CD4-positive, alpha-beta memory T cell (primary cell): ENCODE measurements at regions of chrX and their contacts with region 1.

Region 1: GRCh38 chrX:71111141-71111843 is at the start of gene IL2RG:
- DNase-seq: peak; percentile 89 to 95 (median 93)
- H3K4me3 ChIP-seq: peak within 1 kb of the TSS; percentile 81 to 93
- H3K4me3 Mint-ChIP-seq: peak within 1 kb of the TSS; percentile 90 to 99 (median 95)
- H3K27ac ChIP-seq: peak within 1 kb of the TSS; percentile 96
- H3K27ac Mint-ChIP-seq: peak within 1 kb of the TSS; percentile 97 to 99 (median 99)
- H3K4me1 ChIP-seq: peaks cover 46% of the 10 kb centered on the region
- H3K4me1 Mint-ChIP-seq: peaks cover 24 to 69% (median 53%) of the 10 kb centered on the region in 4 donors
- H3K27me3 ChIP-seq: no peaks in the 10 kb centered on the region
- H3K27me3 Mint-ChIP-seq: no peaks in the 10 kb centered on the region
- total RNA-seq, gene IL2RG: 378 to 379 TPM

Region 2: DNA sequence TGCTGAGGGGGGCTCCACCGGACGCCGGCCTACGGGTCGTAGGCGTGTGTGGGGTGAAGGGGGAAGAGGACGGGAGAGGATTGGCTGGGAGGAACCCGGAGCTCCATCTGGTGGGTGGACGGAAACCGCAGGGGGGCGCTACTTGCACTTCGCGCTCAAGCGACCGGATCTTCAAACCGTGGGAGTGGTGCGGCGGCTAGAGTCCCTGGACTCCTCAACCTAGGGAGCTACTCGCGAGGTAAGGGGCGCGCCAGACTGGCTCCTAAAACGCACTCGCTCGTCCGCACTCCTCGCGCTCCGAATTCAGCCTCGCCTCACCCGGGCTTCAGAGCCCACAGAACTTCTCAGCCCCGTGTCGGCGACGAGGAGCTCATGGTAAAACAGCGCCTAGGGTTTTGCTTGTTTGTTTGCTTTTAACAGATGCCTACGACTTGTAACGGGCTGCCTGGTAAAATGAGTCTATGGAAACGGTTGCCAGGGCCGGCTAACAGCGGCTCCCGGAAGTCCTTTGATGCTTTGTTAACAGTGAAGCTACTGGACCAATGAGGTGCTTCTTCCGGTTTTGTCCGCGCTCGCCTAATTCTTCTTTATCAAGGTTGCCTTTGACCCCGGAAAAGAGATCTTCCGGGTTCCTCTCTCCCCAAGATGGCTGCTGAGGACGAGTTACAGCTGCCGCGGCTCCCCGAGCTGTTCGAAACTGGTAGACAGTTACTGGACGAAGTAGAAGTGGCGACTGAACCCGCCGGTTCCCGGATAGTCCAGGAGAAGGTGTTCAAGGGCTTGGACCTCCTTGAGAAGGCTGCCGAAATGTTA is 977.8 kb before region 1 on chrX and contains the start of gene IGBP1:
- CTCF ChIA-PET with region 1: no interaction called
- POLR2A ChIA-PET with region 1: no interaction called
- intact Hi-C with region 1: no loop called
- DNase-seq: peak; percentile 78 to 94 (median 86)
- H3K4me3 ChIP-seq: peak within 1 kb of the TSS; percentile 89 to 90
- H3K4me3 Mint-ChIP-seq: peak within 1 kb of the TSS; percentile 87 to 99 (median 98)
- H3K27ac ChIP-seq: peak within 1 kb of the TSS; percentile 77
- H3K27ac Mint-ChIP-seq: peak within 1 kb of the TSS; percentile 84 to 99 (median 98)
- H3K4me1 ChIP-seq: peaks cover 35% of the 10 kb centered on the region
- H3K4me1 Mint-ChIP-seq: peaks cover 16 to 38% (median 22%) of the 10 kb centered on the region in 4 donors
- H3K27me3 ChIP-seq: no peaks in the 10 kb centered on the region
- H3K27me3 Mint-ChIP-seq: no peaks in the 10 kb centered on the region
- total RNA-seq, gene IGBP1: 60.8 to 66.2 TPM

Region 3: GRCh38 chrX:71068049-71068763 is 43.1 kb before region 1 on chrX and contains the start of gene SNX12:
- CTCF ChIA-PET with region 1: no interaction called
- POLR2A ChIA-PET with region 1: interaction called, 14 read pairs
- intact Hi-C with region 1: loop called (anchors 1 kb)
- DNase-seq: peak; percentile 88 to 93 (median 91)
- H3K4me3 ChIP-seq: peak within 1 kb of the TSS; percentile 53 to 69
- H3K4me3 Mint-ChIP-seq: peak within 1 kb of the TSS; percentile 88 to 97 (median 93)
- H3K27ac ChIP-seq: peak within 1 kb of the TSS; percentile 84
- H3K27ac Mint-ChIP-seq: peak within 1 kb of the TSS; percentile 93 to 98 (median 97)
- H3K4me1 ChIP-seq: peaks cover 16% of the 10 kb centered on the region
- H3K4me1 Mint-ChIP-seq: peaks cover 2 to 33% (median 14%) of the 10 kb centered on the region in 4 donors
- H3K27me3 ChIP-seq: no peaks in the 10 kb centered on the region
- H3K27me3 Mint-ChIP-seq: no peaks in the 10 kb centered on the region
- total RNA-seq, gene SNX12: 36.7 to 36.9 TPM